Calu3 (cell line): ENCODE measurements at regions of chrX and their contacts with region 1.

Region 1: DNA sequence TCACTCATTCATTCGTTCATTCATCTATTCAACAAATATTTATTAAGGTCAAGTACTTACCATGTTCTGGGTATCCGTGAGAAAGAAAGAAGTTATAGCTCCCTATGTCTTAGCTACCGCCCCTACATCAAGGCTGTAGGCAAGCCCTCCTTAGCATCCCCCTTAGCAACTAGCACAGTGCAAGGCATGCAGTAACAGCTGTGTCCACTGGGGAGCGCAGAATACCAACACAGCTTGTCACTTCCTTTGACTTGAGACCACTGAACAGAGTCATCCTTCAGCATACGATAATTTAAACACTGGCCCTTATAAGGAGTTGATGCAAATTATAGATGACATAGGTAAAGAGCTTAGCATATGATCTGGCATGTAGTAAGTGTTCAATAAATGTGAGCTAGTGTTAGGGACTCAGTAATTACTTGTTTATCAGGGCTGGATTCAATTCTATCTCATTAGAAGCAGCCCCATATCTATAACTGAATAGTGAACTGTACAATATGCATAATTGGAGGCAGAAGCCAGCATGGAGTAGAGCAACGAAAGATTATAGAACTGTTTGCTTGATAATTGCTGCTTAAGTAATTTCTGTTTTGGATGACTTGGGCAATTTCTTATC is 8.7 kb downstream of the KIAA1210 start:
- DNase-seq: peak; percentile 54
- H3K4me3 Mint-ChIP-seq: no peak overlapping the region
- H3K27ac Mint-ChIP-seq: no peak overlapping the region
- H3K4me1 Mint-ChIP-seq: no peaks in the 10 kb centered on the region
- H3K27me3 Mint-ChIP-seq: peaks cover 47% of the 10 kb centered on the region
- CTCF ChIP-seq: peak; percentile 75

Region 2: GRCh38 chrX:119181491-119181890 is 62.6 kb after region 1 on chrX:
- CTCF ChIA-PET with region 1: interaction called, 5 read pairs
- intact Hi-C with region 1: loop called (anchors 5 kb)
- DNase-seq: peak; percentile 52
- H3K4me3 Mint-ChIP-seq: no peak overlapping the region
- H3K27ac Mint-ChIP-seq: no peak overlapping the region
- H3K4me1 Mint-ChIP-seq: no peaks in the 10 kb centered on the region
- H3K27me3 Mint-ChIP-seq: peaks cover 3% of the 10 kb centered on the region
- CTCF ChIP-seq: no peak

Region 3: GRCh38 chrX:119194621-119195020 is 75.7 kb after region 1 on chrX:
- CTCF ChIA-PET with region 1: interaction called, 7 read pairs
- intact Hi-C with region 1: loop called (anchors 2 kb)
- DNase-seq: no peak
- H3K4me3 Mint-ChIP-seq: no peak overlapping the region
- H3K27ac Mint-ChIP-seq: no peak overlapping the region
- H3K4me1 Mint-ChIP-seq: no peaks in the 10 kb centered on the region
- H3K27me3 Mint-ChIP-seq: peaks cover 73% of the 10 kb centered on the region
- CTCF ChIP-seq: no peak

Region 4: GRCh38 chrX:119222932-119223331 is 104.0 kb after region 1 on chrX:
- CTCF ChIA-PET with region 1: no interaction called
- intact Hi-C with region 1: loop called (anchors 2 kb)
- DNase-seq: no peak
- H3K4me3 Mint-ChIP-seq: no peak overlapping the region
- H3K27ac Mint-ChIP-seq: no peak overlapping the region
- H3K4me1 Mint-ChIP-seq: no peaks in the 10 kb centered on the region
- H3K27me3 Mint-ChIP-seq: peaks cover 80% of the 10 kb centered on the region
- CTCF ChIP-seq: no peak